Endothelial cell of umbilical vein (primary cell): ENCODE measurements at regions of chr13 and their contacts with region 1.

Region 1: DNA sequence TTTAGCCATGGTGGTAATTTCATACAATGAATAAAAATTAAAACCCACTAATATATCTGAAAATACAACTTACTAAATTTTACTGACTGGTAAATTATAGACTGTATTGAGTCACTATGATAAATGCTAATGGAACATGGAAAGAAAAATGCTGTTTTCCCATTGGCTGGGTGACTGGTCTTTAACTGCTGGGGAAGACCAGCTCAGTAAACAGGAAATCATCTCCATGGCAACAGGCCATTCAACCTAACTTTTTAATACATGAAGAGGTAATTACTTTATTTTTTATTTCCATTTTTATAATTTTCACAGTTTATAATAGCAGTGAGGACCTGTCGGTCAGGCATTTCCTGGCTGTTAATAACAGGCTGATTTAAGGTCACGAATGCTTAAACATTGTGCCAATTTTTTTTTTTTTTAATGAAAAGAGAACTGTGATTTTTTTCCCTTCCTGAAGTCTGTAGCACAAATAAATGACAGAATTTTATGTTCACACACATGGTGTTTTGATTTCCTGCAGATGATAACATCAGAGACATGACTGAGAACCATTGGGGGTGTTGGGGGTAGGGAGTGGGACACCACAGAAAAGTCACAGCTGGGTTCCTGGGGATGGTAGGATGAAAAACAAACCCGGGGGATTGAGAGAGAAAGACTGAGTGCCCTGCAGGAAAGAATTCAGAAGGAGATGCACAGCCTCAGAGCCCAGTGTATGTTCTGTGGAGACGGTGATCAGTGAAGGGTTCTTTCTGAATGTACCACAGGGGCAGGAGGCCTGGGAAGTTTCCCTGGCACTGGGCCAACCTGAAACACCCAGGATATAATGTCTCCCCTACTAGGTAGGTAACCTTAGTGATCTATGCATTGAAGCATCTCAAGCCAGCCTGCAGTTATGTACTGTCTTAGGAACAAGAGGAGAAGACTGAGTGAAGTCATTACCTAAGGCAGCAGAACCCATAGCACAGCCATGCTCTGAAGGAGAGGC is 297.1 kb downstream of the COG6 start:
- DNase-seq: peak; percentile 97
- H3K4me3 ChIP-seq: no peak overlapping the region
- H3K27ac ChIP-seq: peak overlapping the region; percentile 88
- H3K4me1 ChIP-seq: peaks cover 24% of the 10 kb centered on the region
- H3K27me3 ChIP-seq: no peaks in the 10 kb centered on the region
- CTCF ChIP-seq: no peak
- POLR2A ChIP-seq: no peak

Region 2: GRCh38 chr13:39777527-39778061 is 174.9 kb before region 1 on chr13:
- CTCF ChIA-PET with region 1: interaction called, 3 read pairs
- POLR2A ChIA-PET with region 1: no interaction called
- dilution Hi-C with region 1: no loop called
- intact Hi-C with region 1: loop called (anchors 1 kb)
- DNase-seq: peak; percentile 88
- H3K4me3 ChIP-seq: no peak overlapping the region
- H3K27ac ChIP-seq: peak overlapping the region; percentile 99
- H3K4me1 ChIP-seq: peaks cover 59% of the 10 kb centered on the region
- H3K27me3 ChIP-seq: no peaks in the 10 kb centered on the region
- CTCF ChIP-seq: peak; percentile 51 to 52
- POLR2A ChIP-seq: no peak

Region 3: DNA sequence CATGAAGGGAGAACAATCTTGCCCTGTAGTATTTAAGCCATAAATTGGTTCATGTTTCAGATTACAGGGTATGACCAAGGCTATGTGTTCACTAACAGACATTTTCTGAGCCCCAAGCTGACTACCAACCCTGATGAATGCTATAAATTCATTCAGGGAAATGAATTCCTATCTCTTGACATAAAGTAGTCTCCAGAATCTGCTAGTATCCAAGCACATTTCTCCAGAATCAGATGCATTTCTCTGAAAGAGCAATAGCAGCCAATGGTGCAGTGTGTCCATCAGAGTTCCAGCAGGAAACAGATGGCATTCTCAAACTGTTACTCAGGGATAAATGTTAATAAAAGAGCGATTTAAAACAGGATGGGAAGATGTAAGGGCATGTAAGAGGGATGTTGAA is 70.7 kb before region 1 on chr13:
- CTCF ChIA-PET with region 1: no interaction called
- POLR2A ChIA-PET with region 1: interaction called, 3 read pairs
- dilution Hi-C with region 1: no loop called
- intact Hi-C with region 1: loop called (anchors 1 kb)
- DNase-seq: peak; percentile 88
- H3K4me3 ChIP-seq: no peak overlapping the region
- H3K27ac ChIP-seq: peak overlapping the region; percentile 90
- H3K4me1 ChIP-seq: peaks cover 53% of the 10 kb centered on the region
- H3K27me3 ChIP-seq: no peaks in the 10 kb centered on the region
- CTCF ChIP-seq: no peak
- POLR2A ChIP-seq: no peak

Region 4: DNA sequence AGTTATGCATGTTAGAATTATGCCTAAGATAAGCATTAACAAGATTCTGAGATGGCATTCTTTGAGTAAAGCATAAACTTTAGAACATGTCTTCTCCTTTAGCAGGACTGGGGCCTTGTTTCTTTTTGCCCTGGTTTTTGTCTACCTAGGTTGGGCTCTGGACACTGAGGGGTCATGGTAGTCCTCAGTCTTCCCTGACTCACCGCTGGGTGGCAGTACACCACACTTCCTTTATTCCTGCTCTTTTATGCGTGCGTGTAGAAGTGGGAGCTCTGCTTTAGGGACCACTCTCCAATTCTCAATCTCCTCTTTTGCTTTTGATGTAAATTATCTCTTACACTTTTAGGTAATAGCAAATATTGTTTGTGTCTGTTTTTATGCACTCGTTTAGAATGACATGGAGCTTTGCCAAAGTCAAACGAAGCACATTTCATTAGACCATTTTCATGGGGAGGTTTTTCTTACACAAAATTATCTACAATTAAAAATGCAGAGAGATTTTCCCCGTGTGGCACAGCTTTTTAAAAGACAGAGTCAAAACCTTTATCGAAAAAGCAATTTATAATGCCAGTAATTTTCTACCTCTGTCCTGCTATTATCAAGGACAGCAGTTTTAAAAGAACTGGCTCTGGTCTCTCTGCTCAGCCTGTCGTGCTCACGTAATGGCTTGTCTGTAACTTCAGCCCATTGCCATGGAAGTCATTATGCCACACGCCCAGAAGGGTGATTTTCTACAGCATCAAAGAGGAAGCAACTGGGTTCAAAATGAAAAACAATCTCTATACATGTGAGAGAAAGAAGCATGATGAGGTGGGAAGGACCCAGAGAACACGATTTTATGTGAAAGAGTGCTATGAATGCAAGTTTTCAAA is 116.9 kb after region 1 on chr13:
- CTCF ChIA-PET with region 1: interaction called, 10 read pairs
- POLR2A ChIA-PET with region 1: no interaction called
- dilution Hi-C with region 1: no loop called
- intact Hi-C with region 1: loop called (anchors 2 kb)
- DNase-seq: peak; percentile 69
- H3K4me3 ChIP-seq: no peak overlapping the region
- H3K27ac ChIP-seq: no peak overlapping the region
- H3K4me1 ChIP-seq: peaks cover 5% of the 10 kb centered on the region
- H3K27me3 ChIP-seq: no peaks in the 10 kb centered on the region
- CTCF ChIP-seq: peak; percentile 69 to 82
- POLR2A ChIP-seq: no peak

Region 5: GRCh38 chr13:40130871-40131636 is 178.5 kb after region 1 on chr13:
- CTCF ChIA-PET with region 1: no interaction called
- POLR2A ChIA-PET with region 1: no interaction called
- dilution Hi-C with region 1: no loop called
- intact Hi-C with region 1: loop called (anchors 5 kb)
- DNase-seq: peak; percentile 93
- H3K4me3 ChIP-seq: no peak overlapping the region
- H3K27ac ChIP-seq: peak overlapping the region; percentile 60
- H3K4me1 ChIP-seq: peaks cover 13% of the 10 kb centered on the region
- H3K27me3 ChIP-seq: no peaks in the 10 kb centered on the region
- CTCF ChIP-seq: no peak
- POLR2A ChIP-seq: no peak

Region 6: DNA sequence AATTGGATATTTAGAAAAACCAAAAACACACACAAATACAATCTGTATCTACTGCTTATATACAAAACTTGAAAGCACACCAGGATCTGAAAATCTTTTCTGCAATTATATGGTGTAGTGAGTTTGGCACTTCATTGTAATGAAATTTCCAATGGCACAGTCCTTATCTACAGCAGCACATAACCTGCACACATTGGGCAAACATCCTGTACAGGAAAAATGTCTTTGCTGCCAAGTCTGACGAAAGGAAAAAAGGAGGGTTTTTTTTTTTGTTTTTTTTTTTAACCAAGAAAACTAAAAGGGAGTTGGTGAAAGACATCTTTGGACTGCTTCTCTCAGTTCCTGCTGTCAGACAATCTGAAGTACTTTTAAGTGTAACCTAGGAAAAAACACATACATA is 606.1 kb after region 1 on chr13:
- CTCF ChIA-PET with region 1: no interaction called
- POLR2A ChIA-PET with region 1: no interaction called
- dilution Hi-C with region 1: no loop called
- intact Hi-C with region 1: loop called (anchors 1 kb)
- DNase-seq: peak; percentile 95
- H3K4me3 ChIP-seq: peak overlapping the region in 1 of 3 experiments; percentile 1
- H3K27ac ChIP-seq: peak overlapping the region; percentile 61
- H3K4me1 ChIP-seq: peaks cover 56% of the 10 kb centered on the region
- H3K27me3 ChIP-seq: no peaks in the 10 kb centered on the region
- CTCF ChIP-seq: no peak
- POLR2A ChIP-seq: peak; percentile 35